ENCODE measurements at regions of chr4 and their contacts with region 1.

Region 1: GRCh38 chr4:163544407-163545038 is 50.0 kb downstream of the TMA16 start:
- DNase-seq: peak; percentile 39 to 85 (median 63)
- ATAC-seq: peak; percentile 92
- H3K4me3 ChIP-seq: no peak overlapping the region
- H3K27ac ChIP-seq: no peak overlapping the region
- H3K4me1 ChIP-seq: peaks cover 0 to 7% of the 10 kb centered on the region in 2 donors
- H3K27me3 ChIP-seq: no peaks in the 10 kb centered on the region
- CTCF ChIP-seq: peak; percentile 81 to 85

Region 2: GRCh38 chr4:163263606-163264005 is 280.9 kb before region 1 on chr4:
- intact Hi-C with region 1: no loop called
- DNase-seq: no peak
- ATAC-seq: no peak
- H3K4me3 ChIP-seq: no peak overlapping the region
- H3K27ac ChIP-seq: no peak overlapping the region
- H3K4me1 ChIP-seq: no peaks in the 10 kb centered on the region
- H3K27me3 ChIP-seq: no peaks in the 10 kb centered on the region
- CTCF ChIP-seq: no peak

Region 3: GRCh38 chr4:163309466-163309865 is 235.1 kb before region 1 on chr4:
- intact Hi-C with region 1: no loop called
- DNase-seq: no peak
- ATAC-seq: no peak
- H3K4me3 ChIP-seq: no peak overlapping the region
- H3K27ac ChIP-seq: no peak overlapping the region
- H3K4me1 ChIP-seq: no peaks in the 10 kb centered on the region
- H3K27me3 ChIP-seq: no peaks in the 10 kb centered on the region
- CTCF ChIP-seq: no peak

Region 4: DNA sequence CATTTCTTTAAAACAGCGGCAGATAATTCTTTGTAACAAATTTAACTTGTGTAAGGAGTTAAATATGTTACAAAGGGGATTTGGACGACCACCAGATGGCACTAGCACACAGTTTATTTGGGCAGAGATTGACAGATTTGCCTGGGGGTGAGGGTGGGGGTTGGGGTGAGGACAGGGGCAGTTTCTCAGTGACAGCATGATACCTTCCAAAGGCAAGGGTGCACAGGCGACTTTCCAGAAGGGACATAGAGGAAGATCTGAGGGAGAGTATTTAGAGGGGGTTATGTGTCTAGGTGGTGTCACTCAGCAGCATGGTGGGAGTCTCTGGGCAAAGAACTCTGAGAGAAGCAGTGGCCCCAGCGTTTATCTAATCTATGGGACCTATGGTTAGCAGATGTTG is 59.6 kb before region 1 on chr4:
- intact Hi-C with region 1: loop called in 1 of 2 experiments (anchors 5 kb)
- DNase-seq: peak in 2 of 4 donors; percentile 30 to 54
- ATAC-seq: peak; percentile 67
- H3K4me3 ChIP-seq: no peak overlapping the region
- H3K27ac ChIP-seq: no peak overlapping the region
- H3K4me1 ChIP-seq: peaks cover 0 to 8% of the 10 kb centered on the region in 2 donors
- H3K27me3 ChIP-seq: no peaks in the 10 kb centered on the region
- CTCF ChIP-seq: peak; percentile 9 to 31

Region 5: DNA sequence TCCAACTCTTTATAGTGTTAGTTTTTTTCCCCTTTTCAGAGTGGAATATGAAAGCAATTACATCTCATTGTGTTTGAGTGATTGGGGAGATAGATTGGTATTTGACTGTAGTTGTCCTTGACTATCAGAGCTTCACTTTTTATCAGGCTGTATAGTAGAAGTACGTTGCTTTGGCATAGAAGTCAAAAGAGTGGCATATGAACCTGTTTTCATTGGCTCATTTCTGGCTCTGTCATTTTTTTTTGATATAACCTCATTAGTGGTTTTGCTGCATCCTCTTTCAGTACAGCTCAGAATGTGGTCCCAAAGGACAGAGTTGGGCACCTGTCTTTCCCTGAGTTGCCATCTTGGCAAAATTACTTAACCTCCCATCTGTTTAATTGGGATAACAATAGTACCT is 48.6 kb before region 1 on chr4:
- intact Hi-C with region 1: no loop called
- DNase-seq: no peak
- ATAC-seq: no peak
- H3K4me3 ChIP-seq: peak overlapping the region in 1 of 2 donors; percentile 64
- H3K27ac ChIP-seq: no peak overlapping the region
- H3K4me1 ChIP-seq: peaks cover 0 to 34% of the 10 kb centered on the region in 2 donors
- H3K27me3 ChIP-seq: no peaks in the 10 kb centered on the region
- CTCF ChIP-seq: no peak